ENCODE measurements at regions of chr22 and their contacts with region 1.

Region 1: GRCh38 chr22:20418211-20418788 is 19.3 kb downstream of the SCARF2 start:
- DNase-seq: peak; percentile 86
- ATAC-seq: peak; percentile 80
- H3K4me3 ChIP-seq: peak overlapping the region in 3 of 5 experiments; percentile 37 to 50 (median 45)
- H3K4me3 Mint-ChIP-seq: peak overlapping the region; percentile 77
- H3K27ac ChIP-seq: no peak overlapping the region
- H3K27ac Mint-ChIP-seq: no peak overlapping the region
- H3K4me1 ChIP-seq: peaks cover 0 to 5% of the 10 kb centered on the region in 2 donors
- H3K4me1 Mint-ChIP-seq: peaks cover 4% of the 10 kb centered on the region
- H3K27me3 ChIP-seq: peaks cover 0 to 5% (median 2%) of the 10 kb centered on the region in 4 experiments
- H3K27me3 Mint-ChIP-seq: peaks cover under 1% of the 10 kb centered on the region
- CTCF ChIP-seq: peak; percentile 86

Region 2: GRCh38 chr22:20430720-20431510 is 12.6 kb after region 1 on chr22:
- CTCF ChIA-PET with region 1: interaction called, 14 read pairs
- POLR2A ChIA-PET with region 1: interaction called, 3 read pairs
- intact Hi-C with region 1: loop called (anchors 1 kb)
- DNase-seq: peak; percentile 78
- ATAC-seq: peak; percentile 56
- H3K4me3 ChIP-seq: peak overlapping the region in 4 of 5 experiments; percentile 47 to 80 (median 67)
- H3K4me3 Mint-ChIP-seq: peak overlapping the region; percentile 90
- H3K27ac ChIP-seq: no peak overlapping the region
- H3K27ac Mint-ChIP-seq: no peak overlapping the region
- H3K4me1 ChIP-seq: peaks cover 36 to 49% of the 10 kb centered on the region in 2 donors
- H3K4me1 Mint-ChIP-seq: peaks cover 32% of the 10 kb centered on the region
- H3K27me3 ChIP-seq: peaks cover 0 to 90% (median 41%) of the 10 kb centered on the region in 4 experiments
- H3K27me3 Mint-ChIP-seq: peaks cover 62% of the 10 kb centered on the region
- CTCF ChIP-seq: peak; percentile 39

Region 3: GRCh38 chr22:20463324-20464095 is 45.2 kb after region 1 on chr22:
- CTCF ChIA-PET with region 1: interaction called, 35 read pairs
- POLR2A ChIA-PET with region 1: interaction called, 11 read pairs
- intact Hi-C with region 1: no loop called
- DNase-seq: peak; percentile 82
- ATAC-seq: peak; percentile 80
- H3K4me3 ChIP-seq: peak overlapping the region in 4 of 5 experiments; percentile 18 to 50 (median 28)
- H3K4me3 Mint-ChIP-seq: peak overlapping the region; percentile 80
- H3K27ac ChIP-seq: peak overlapping the region; percentile 87 to 89
- H3K27ac Mint-ChIP-seq: peak overlapping the region; percentile 100
- H3K4me1 ChIP-seq: peaks cover 35 to 38% of the 10 kb centered on the region in 2 donors
- H3K4me1 Mint-ChIP-seq: peaks cover 51% of the 10 kb centered on the region
- H3K27me3 ChIP-seq: no peaks in the 10 kb centered on the region
- H3K27me3 Mint-ChIP-seq: no peaks in the 10 kb centered on the region
- CTCF ChIP-seq: no peak

Region 4: GRCh38 chr22:20568989-20569769 is 150.9 kb after region 1 on chr22:
- CTCF ChIA-PET with region 1: interaction called, 56 read pairs
- POLR2A ChIA-PET with region 1: no interaction called
- intact Hi-C with region 1: loop called (anchors 1 kb)
- DNase-seq: peak; percentile 56
- ATAC-seq: peak; percentile 62
- H3K4me3 ChIP-seq: no peak overlapping the region
- H3K4me3 Mint-ChIP-seq: no peak overlapping the region
- H3K27ac ChIP-seq: peak overlapping the region in 1 of 2 donors; percentile 9
- H3K27ac Mint-ChIP-seq: peak overlapping the region; percentile 59
- H3K4me1 ChIP-seq: peaks cover 0 to 16% of the 10 kb centered on the region in 2 donors
- H3K4me1 Mint-ChIP-seq: peaks cover 6% of the 10 kb centered on the region
- H3K27me3 ChIP-seq: no peaks in the 10 kb centered on the region
- H3K27me3 Mint-ChIP-seq: no peaks in the 10 kb centered on the region
- CTCF ChIP-seq: no peak

Region 5: DNA sequence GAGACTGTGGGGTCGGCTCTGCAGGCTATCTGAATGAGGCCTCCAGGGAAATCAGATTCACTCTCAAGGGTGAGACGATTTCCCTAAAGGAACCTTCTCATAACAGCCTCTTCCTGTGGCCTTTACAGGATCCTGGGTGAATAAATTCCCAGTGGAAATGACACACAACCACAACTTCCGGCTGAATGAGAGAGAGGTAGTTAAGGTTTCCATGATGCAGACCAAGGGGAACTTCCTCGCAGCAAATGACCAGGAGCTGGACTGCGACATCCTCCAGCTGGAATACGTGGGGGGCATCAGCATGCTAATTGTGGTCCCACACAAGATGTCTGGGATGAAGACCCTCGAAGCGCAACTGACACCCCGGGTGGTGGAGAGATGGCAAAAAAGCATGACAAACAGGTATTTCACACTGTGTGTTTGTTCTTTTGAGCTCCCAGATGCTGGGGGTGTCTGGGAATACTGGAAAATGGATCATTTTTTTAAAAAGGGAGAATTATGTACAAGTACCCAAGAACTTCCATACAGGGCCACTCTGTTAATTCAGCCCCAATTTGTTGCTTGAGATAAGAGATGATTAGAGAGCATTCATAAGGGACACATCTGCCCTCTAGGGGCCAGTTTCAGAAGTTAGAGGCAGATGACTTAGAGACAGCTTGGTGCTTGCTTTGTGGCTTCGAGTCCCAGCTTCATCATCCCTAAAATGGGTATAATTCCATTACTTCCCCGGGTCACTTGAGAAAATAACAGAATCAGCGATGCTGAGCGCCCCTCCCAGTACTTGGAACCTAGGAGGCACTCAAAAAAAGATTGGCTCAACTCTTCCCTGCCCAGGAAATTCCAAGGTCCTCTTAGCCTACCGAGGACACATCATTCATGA is 365.8 kb after region 1 on chr22:
- CTCF ChIA-PET with region 1: interaction called, 3 read pairs
- POLR2A ChIA-PET with region 1: no interaction called
- intact Hi-C with region 1: loop called (anchors 2 kb)
- DNase-seq: peak; percentile 63
- ATAC-seq: peak; percentile 75
- H3K4me3 ChIP-seq: no peak overlapping the region
- H3K4me3 Mint-ChIP-seq: no peak overlapping the region
- H3K27ac ChIP-seq: no peak overlapping the region
- H3K27ac Mint-ChIP-seq: peak overlapping the region; percentile 27
- H3K4me1 ChIP-seq: peaks cover 7 to 9% of the 10 kb centered on the region in 2 donors
- H3K4me1 Mint-ChIP-seq: peaks cover 11% of the 10 kb centered on the region
- H3K27me3 ChIP-seq: no peaks in the 10 kb centered on the region
- H3K27me3 Mint-ChIP-seq: no peaks in the 10 kb centered on the region
- CTCF ChIP-seq: peak; percentile 82